Posterior cingulate gyrus (tissue), 11 donors: ENCODE measurements at regions of chr7 and their contacts with region 1.

Region 1: GRCh38 chr7:31883761-31884164 is 186.4 kb downstream of the PDE1C start:
- DNase-seq: peak in 9 of 10 donors; percentile 15 to 90 (median 43)

Region 2: DNA sequence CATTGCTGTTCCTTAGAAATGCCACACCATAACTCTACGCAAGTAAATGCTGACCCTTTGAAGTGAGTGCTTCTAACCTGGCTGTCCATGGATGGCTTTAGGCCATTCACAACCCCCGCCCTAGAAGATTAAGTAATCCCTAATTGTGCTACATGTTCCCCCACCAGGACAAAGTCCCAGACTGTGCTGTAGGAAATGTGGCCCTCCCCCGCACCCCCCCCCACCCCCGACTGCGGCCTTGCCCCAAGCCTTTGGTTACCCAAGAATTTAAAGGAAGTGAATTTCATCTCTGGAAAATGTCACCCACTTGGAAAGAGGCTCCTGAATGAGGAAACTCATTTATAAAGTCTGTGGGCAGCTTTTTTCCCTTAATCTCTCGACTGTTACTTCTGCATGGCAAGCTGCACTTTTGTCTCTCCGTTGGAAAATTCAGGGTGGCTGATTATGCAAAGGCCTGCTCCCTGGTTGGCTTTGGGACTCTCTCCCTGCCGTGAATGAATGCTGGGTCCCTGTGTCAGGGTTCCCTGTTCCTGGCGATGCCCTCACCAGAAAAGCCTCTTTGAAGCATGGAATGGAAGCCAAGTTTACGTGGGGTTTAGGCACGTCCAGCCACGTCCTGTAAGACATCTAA is 1003.6 kb before region 1 on chr7:
- intact Hi-C with region 1: no loop called
- DNase-seq: no peak

Region 3: GRCh38 chr7:31919678-31920369 is 36.1 kb after region 1 on chr7:
- intact Hi-C with region 1: no loop called
- DNase-seq: no peak

Region 4: GRCh38 chr7:32043714-32044113 is 160.0 kb after region 1 on chr7:
- intact Hi-C with region 1: loop called (anchors 10 kb)
- DNase-seq: no peak